Activated B cell treated with CpG ODN at 0.5 μM for 24 hours (primary cell): ENCODE measurements at regions of chr5 and their contacts with region 1.

Region 1: GRCh38 chr5:138542956-138543729 is at the start of gene ETF1:
- DNase-seq: peak; percentile 97
- ATAC-seq: peak; percentile 90
- H3K4me3 Mint-ChIP-seq: peak within 1 kb of the TSS; percentile 100
- H3K27ac Mint-ChIP-seq: peak within 1 kb of the TSS; percentile 99
- H3K4me1 Mint-ChIP-seq: peaks cover 66% of the 10 kb centered on the region
- H3K27me3 Mint-ChIP-seq: no peaks in the 10 kb centered on the region
- CTCF ChIP-seq: no peak
- total RNA-seq, gene ETF1: 95.7 and 99.6 TPM in 2 replicates

Region 2: DNA sequence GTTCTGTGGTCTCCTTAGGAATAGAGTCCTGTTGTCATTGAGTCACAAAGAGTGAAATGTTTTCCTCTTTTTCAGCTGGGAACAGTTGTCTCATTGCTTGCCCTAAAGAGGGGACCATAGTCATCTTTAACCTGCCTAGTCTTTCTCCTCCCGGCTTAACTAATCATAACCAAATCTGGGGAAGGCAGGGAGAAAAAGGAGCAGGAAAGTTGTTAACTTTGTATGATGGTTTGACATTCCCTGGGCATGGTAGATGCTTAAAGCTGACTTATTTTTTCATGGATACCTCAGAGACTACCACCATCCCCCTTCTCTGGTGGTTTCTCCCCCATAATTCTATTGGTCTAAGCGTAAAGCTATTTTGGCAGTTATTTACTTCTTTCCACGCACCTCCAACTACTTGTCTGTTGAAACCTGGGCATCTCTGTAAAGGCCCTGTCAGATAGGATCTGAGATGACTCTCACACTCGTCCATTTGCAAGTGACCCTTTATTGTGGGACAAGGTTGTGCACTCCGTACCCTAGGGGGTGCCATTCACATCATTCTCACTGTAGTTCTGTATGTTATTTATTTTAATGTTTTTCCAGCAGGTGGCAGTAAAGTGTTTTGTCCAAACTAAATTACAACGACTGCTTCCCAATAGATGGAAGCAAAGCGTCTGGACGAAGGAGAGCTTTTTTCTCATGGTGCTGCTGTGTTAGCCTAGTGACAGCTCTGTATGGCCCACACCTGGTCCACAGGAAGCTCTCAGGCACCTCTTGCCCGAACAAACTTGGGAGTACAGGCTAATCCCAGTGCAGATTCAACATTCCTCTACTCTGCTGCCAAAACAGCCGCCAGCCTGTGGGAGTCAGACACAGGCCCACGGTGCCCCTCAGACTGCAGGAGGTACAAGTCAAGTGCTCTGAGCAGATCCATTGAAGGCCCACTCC is 507.3 kb before region 1 on chr5:
- CTCF ChIA-PET with region 1: no interaction called
- POLR2A ChIA-PET with region 1: interaction called, 3 read pairs
- intact Hi-C with region 1: loop called (anchors 1 kb)
- DNase-seq: no peak
- ATAC-seq: peak; percentile 44
- H3K4me3 Mint-ChIP-seq: peak overlapping the region; percentile 48
- H3K27ac Mint-ChIP-seq: peak overlapping the region; percentile 21
- H3K4me1 Mint-ChIP-seq: peaks cover 34% of the 10 kb centered on the region
- H3K27me3 Mint-ChIP-seq: no peaks in the 10 kb centered on the region
- CTCF ChIP-seq: peak; percentile 72

Region 3: GRCh38 chr5:138352071-138352721 is 190.9 kb before region 1 on chr5 and contains the start of gene KDM3B:
- CTCF ChIA-PET with region 1: interaction called, 10 read pairs
- POLR2A ChIA-PET with region 1: interaction called, 13 read pairs
- intact Hi-C with region 1: loop called (anchors 1 kb)
- DNase-seq: peak; percentile 99
- ATAC-seq: peak; percentile 86
- H3K4me3 Mint-ChIP-seq: peak within 1 kb of the TSS; percentile 92
- H3K27ac Mint-ChIP-seq: peak within 1 kb of the TSS; percentile 91
- H3K4me1 Mint-ChIP-seq: peaks cover 51% of the 10 kb centered on the region
- H3K27me3 Mint-ChIP-seq: no peaks in the 10 kb centered on the region
- CTCF ChIP-seq: peak; percentile 99
- total RNA-seq, gene KDM3B: 85.5 and 94.0 TPM in 2 replicates

Region 4: DNA sequence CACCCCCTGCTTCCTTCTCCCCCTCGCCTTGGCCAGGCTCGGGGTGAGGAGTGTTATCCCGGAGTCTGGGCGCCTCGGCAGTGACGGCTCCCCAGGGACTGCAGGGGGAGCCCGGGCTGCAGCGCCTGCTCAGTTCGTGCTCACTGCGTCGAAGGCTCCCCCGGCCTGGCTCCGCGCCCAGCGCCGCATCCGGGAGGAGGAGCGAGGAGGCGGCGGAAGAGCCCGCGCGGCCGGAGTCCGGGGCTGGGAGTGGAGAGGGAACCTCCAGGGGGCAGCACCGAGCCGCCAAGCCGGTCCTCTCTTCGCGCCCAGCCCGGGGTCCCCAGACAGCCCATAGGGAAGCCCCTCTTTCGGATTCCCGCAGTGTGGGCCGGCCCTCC is 79.1 kb before region 1 on chr5:
- CTCF ChIA-PET with region 1: no interaction called
- POLR2A ChIA-PET with region 1: interaction called, 22 read pairs
- intact Hi-C with region 1: loop called (anchors 1 kb)
- DNase-seq: peak; percentile 92
- ATAC-seq: peak; percentile 56
- H3K4me3 Mint-ChIP-seq: peak overlapping the region; percentile 89
- H3K27ac Mint-ChIP-seq: peak overlapping the region; percentile 92
- H3K4me1 Mint-ChIP-seq: peaks cover 49% of the 10 kb centered on the region
- H3K27me3 Mint-ChIP-seq: no peaks in the 10 kb centered on the region
- CTCF ChIP-seq: peak; percentile 87

Region 5: DNA sequence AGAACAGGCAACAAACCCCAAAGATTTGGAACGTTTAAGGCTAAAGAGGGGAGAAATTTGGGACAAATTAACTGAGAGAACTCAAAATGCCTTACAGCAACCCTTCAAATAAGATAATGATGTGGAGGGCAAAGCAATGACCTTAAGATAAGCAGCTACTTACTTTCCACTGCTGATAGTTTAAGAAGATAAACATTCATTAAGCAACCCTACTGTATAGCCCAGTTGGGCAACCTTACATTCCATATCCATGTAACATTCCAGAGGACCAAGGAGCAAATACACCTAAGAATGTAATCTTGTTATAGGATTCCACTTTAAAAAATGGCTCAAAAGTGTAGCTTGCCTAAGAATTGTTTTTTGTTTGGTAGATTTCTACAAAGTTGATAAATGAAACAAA is 14.9 kb before region 1 on chr5:
- CTCF ChIA-PET with region 1: interaction called, 3 read pairs
- POLR2A ChIA-PET with region 1: interaction called, 15 read pairs
- intact Hi-C with region 1: loop called (anchors 2 kb)
- DNase-seq: no peak
- ATAC-seq: no peak
- H3K4me3 Mint-ChIP-seq: no peak overlapping the region
- H3K27ac Mint-ChIP-seq: peak overlapping the region; percentile 16
- H3K4me1 Mint-ChIP-seq: peaks cover 57% of the 10 kb centered on the region
- H3K27me3 Mint-ChIP-seq: no peaks in the 10 kb centered on the region
- CTCF ChIP-seq: no peak

Region 6: GRCh38 chr5:139392678-139393496 is 849.7 kb after region 1 on chr5:
- CTCF ChIA-PET with region 1: no interaction called
- POLR2A ChIA-PET with region 1: no interaction called
- intact Hi-C with region 1: loop called (anchors 2 kb)
- DNase-seq: peak; percentile 89
- ATAC-seq: peak; percentile 62
- H3K4me3 Mint-ChIP-seq: peak overlapping the region; percentile 94
- H3K27ac Mint-ChIP-seq: peak overlapping the region; percentile 86
- H3K4me1 Mint-ChIP-seq: peaks cover 39% of the 10 kb centered on the region
- H3K27me3 Mint-ChIP-seq: no peaks in the 10 kb centered on the region
- CTCF ChIP-seq: no peak